Tibial artery (tissue), 4 donors: ENCODE measurements at regions of chr6 and their contacts with region 1.

Region 1: DNA sequence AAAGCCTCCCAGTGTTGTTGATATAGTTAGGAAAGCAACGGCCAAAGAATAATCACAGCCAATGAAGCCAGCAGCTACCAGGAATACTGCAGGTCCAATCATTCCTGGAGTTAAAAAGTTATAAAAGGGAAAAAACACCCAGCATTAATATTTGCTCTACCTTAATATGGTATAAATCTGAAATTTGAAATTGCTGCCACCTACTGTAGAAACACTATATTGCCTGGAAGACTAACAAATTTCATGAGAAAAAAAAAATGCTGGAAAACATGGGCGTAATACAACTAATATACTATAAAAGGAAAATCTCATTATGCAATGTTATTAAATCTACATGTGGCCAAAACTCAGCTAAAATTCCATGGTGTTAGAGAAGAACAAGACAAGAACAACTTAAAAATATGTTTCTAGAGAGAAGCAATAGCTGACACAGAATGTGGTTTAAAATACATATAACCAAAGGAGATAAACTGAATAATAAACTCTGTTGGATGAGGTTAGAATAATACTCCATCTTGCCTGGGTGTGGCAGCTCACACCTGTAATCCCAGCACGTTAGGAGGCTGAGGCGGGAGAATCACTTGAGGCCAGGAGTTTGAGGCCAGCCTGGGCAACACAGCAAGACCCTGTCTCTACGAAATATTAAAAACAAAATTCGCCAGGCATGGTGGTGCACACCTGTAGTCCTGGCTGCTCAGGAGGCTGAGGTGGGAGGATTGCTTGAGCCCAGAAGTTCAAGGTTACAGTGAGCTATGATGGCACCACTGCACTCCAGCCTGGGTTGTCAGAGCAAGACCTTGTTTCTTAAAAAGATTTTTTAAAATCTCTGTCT is 43.1 kb downstream of the SLC17A5 start:
- DNase-seq: no peak
- H3K4me3 ChIP-seq: no peak overlapping the region
- H3K27ac ChIP-seq: peak overlapping the region; percentile 15 to 50
- H3K4me1 ChIP-seq: peaks cover 0 to 10% (median 0%) of the 10 kb centered on the region in 4 donors
- H3K27me3 ChIP-seq: no peaks in the 10 kb centered on the region
- CTCF ChIP-seq: peak; percentile 66 to 69

Region 2: GRCh38 chr6:73515204-73515655 is 95.4 kb before region 1 on chr6:
- intact Hi-C with region 1: loop called (anchors 2 kb)
- DNase-seq: no peak
- H3K4me3 ChIP-seq: no peak overlapping the region
- H3K27ac ChIP-seq: peak overlapping the region; percentile 10 to 39
- H3K4me1 ChIP-seq: peaks cover 0 to 53% (median 29%) of the 10 kb centered on the region in 4 donors
- H3K27me3 ChIP-seq: no peaks in the 10 kb centered on the region
- CTCF ChIP-seq: no peak

Region 3: DNA sequence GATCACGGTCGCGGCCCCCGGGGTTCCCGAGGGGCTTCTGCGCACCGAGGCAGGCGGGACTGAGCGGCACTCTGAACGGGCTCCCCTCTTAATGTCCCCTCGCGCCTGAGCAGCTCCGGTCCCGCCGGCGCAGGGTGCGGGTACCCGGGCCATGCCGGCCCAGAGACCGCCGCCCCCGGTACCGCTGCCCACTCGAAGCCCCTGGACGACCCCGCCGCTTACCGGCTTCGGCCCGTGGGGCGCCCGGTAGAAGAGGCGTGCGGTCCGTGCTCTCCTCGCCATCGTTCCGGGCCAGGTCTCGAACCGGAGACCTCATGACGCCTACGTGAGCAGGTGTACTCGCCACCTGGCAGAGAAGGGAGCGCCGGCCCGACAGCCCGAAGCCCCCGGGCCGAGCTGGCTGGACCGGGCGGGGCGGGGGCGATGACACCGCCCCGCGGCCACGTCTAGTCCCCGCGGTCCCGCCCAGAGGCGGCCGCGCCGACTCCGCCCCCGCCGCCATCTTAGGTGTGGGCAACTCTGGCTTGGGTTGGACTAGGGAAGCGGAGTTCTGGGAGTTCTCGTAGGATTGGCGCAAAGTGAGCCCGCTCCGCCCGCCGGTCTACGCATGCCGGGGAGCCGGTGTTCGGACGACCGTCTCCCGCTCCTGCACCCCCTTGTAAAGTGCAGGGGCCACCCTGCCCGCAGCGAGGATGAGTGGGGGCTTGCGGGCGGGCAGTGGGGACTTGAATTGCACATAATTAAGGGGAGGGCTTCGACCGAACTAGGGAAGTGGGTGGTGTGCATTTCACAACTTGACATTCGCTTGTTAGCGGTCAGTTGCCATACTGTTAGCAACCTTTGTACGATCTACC is 43.1 kb after region 1 on chr6 and contains the start of gene SLC17A5:
- intact Hi-C with region 1: no loop called
- DNase-seq: peak; percentile 96 to 98
- H3K4me3 ChIP-seq: peak within 1 kb of the TSS; percentile 91 to 100
- H3K27ac ChIP-seq: peak within 1 kb of the TSS; percentile 98 to 99
- H3K4me1 ChIP-seq: peaks cover 0 to 24% (median 8%) of the 10 kb centered on the region in 4 donors
- H3K27me3 ChIP-seq: no peaks in the 10 kb centered on the region
- CTCF ChIP-seq: no peak

Region 4: DNA sequence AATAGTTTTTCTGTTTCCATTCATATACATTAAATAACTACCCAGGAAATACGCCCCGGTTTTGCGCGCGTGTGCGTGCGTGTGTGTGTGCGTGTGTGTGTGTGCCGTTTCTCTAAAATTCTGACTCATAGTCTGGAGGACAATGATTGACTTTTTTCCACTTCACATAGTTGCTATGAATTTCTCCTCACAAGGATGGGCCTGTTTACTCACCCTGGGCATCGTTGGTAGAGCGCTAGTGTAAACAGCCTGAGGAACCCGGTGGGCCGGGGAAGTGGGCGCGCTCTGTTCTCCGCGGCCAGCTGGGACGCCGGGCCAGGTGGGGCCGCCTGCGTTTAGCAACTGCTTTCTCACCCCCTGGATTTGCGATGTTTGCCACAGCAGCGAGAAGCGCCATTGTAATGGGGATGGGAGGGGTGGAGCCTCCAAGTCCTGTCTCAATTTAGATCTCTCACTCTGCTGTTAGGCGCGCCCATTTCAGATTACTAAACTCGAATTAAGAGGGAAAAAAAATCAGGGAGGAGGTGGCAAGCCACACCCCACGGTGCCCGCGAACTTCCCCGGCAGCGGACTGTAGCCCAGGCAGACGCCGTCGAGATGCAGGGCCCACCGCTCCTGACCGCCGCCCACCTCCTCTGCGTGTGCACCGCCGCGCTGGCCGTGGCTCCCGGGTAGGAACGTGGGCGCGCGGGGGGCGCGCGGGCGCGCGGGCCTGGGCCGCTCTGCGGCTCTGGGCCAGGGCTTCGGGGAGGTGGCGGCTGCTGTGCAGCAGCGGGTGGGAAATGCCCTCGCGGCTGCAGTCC is 85.2 kb after region 1 on chr6 and contains the start of gene CD109:
- intact Hi-C with region 1: no loop called
- DNase-seq: peak; percentile 51 to 71
- H3K4me3 ChIP-seq: peak within 1 kb of the TSS; percentile 62 to 63
- H3K27ac ChIP-seq: peak within 1 kb of the TSS; percentile 76 to 84
- H3K4me1 ChIP-seq: peaks cover 0 to 24% (median 16%) of the 10 kb centered on the region in 4 donors
- H3K27me3 ChIP-seq: no peaks in the 10 kb centered on the region
- CTCF ChIP-seq: no peak